Dorsolateral prefrontal cortex (tissue), 120 donors: ENCODE measurements at regions of chr22 and their contacts with region 1.

Region 1: DNA sequence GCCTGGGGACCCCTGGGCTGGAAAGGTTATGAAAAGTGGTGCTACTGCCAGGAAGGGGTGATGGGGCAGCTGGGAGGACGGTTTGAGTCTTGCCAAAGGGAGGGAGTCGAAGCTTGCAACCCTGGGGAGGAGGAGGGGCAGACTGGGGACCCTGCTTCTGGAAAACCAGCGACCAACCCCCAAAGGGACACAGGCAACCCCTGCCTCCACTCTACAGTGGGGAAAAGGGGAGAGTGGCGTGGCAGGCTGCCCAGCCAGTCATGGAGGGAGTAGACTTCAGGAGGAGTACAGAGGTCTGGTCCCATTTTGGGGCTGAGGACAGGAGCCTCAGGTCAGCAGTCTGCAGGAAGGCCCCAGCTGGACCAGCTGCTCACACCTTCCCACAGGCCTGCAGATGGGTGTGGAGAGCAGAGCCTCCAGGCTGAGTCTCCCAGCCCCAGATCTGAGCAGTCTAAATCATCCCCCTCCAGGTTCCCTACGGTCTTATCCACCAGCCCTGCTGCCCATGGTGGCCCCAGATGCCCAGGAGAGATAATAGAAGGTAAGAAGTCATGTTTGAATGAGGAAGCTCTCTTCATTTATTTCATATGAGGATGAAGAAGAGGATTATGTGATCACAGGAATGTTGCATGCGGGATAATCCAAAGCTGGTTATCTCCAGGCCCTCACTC is 3.3 kb downstream of the DDT start:
- DNase-seq: no peak
- H3K4me3 ChIP-seq: no peak overlapping the region
- H3K27ac ChIP-seq: no peak overlapping the region
- H3K27me3 ChIP-seq: no peaks in the 10 kb centered on the region
- CTCF ChIP-seq: no peak

Region 2: DNA sequence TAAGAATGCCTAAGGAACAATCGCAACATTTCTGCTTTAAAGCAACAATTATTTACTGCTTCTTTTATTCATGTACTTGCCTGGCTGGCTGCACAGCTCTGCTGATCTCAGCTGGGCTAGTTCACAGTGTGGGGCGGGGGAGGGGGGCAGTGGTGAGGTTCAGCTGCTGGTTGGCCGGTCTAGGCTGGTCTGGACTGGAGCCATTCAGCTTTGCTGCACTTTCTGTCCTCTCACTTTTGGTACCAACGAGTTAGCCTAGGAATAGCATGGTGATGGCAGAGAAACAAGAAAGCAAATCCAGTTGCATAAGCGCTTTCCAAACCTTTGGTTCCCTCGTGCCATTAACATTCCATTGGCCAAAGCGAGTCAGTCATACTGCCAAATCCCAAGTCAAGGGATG is 92.7 kb before region 1 on chr22:
- intact Hi-C with region 1: no loop called
- DNase-seq: no peak
- H3K4me3 ChIP-seq: no peak overlapping the region
- H3K27ac ChIP-seq: peak overlapping the region in 19 of 59 donors; percentile 7 to 68 (median 38)
- H3K27me3 ChIP-seq: no peaks in the 10 kb centered on the region
- CTCF ChIP-seq: no peak

Region 3: DNA sequence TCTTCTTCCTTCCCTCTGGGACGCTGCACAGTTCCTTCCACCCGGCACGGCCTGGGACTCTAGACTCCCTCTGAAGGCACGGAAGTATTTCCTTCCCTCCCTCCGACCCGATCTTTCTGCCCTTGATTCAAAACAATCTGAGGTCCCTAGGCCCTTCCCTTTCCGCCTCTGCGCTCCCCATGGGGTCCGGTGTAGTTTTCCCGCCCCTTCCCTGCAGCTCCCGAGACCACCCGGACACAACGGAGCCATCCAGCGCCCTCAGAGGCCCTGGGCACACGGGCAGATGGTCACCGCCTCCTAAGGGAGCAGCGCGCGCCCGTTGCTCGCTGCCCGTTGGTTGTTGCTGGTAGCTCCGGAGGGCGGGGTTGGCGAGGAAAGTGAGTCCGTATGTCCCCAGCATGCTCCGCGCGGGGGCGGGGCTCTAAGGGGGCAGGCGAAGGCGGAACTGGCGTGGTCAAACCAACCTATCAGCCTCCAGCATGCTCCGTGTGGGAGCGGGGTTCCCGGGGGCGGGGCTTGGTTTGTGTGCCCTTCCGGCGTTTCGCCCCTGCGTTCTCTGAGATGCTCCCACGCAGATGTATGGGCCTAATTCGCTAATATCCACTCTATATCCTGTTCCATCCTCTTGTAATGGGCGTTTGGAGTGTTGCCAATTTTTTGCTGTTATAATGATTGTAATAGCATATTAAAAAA is 57.1 kb before region 1 on chr22:
- intact Hi-C with region 1: loop called in 1 of 2 experiments (anchors 5 kb)
- DNase-seq: peak; percentile 99 to 100 (median 99)
- H3K4me3 ChIP-seq: peak overlapping the region; percentile 44 to 86 (median 70)
- H3K27ac ChIP-seq: peak overlapping the region; percentile 3 to 96 (median 89)
- H3K27me3 ChIP-seq: no peaks in the 10 kb centered on the region
- CTCF ChIP-seq: peak in 34 of 56 donors; percentile 3 to 57 (median 34)

Region 4: DNA sequence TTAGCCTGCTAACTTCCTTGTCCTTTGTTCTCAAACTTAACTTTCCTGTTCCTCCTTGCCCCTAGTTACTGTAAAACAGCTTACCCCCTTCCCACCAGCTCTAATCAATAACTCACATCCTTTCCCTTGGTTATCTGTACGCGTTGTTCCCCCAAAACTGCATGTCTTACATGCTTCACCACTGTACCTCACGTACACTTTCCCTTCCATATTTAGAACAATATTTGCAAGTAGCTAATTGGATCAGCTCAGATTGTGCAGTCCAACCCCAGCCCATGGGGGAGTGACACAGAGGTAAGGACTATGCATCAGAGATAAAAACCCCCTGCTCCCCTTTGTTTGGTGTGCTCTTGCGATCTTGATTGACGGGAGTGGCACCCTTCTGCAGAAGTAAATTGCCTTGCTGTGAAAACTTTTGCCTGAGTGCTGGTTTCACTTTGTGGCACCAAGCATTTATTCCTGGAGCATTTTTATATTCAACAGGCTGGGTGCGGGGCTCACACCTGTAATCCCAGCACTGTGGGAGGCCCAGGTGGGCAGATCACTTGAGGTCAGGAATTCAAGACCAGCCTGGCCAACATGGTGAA is 45.8 kb before region 1 on chr22:
- intact Hi-C with region 1: loop called (anchors 5 kb)
- DNase-seq: no peak
- H3K4me3 ChIP-seq: no peak overlapping the region
- H3K27ac ChIP-seq: no peak overlapping the region
- H3K27me3 ChIP-seq: no peaks in the 10 kb centered on the region
- CTCF ChIP-seq: no peak

Region 5: GRCh38 chr22:23938328-23939016 is 32.5 kb before region 1 on chr22:
- intact Hi-C with region 1: loop called in 1 of 2 experiments (anchors 5 kb)
- DNase-seq: no peak
- H3K4me3 ChIP-seq: no peak overlapping the region
- H3K27ac ChIP-seq: no peak overlapping the region
- H3K27me3 ChIP-seq: no peaks in the 10 kb centered on the region
- CTCF ChIP-seq: no peak

Region 6: DNA sequence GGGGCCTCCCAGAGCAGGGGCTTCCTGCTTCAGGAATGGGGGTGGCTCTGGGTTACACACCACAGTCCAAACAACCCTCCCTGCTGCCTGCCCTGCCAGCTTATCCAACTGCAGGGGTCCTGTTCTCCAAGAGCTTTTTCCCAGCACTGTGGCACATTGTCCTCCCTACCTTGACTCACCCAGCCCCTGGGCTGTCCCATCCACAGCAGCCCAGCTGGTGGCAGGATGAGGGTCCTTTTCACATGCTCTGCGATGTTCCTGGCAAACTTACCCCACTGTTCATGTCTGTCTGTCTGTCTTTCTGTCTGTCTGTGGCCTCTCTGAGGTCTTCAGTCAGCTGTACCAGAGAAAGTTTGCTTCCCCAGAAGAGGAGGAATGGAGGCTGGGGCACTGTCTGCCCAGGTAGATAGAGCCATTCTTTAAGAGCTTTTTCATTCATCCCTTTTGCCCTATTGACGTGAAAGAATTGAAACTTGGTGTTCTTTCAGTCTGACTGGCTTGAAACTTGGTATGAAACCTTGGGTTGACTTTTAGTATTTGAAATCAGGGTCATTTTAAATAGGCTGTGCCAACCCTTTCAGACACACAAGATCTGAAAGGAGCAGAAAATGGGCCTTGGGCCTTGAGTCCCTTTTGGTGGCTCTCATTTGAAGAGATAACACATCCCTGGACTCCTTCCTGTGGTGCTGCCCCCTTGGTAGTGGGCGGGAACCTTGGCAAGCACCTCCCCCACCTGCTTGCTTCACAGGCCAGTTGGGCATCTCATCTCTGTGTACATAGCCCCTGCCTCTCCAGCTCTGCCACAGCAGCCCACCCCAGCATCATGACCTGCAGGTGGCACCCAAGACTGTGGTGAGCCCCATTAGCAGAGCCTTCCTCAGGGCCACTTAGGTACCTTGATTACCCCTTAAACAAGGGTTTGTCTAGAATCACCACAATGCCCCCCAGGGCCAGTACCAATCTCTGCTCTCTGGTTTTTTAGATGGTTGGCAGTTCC is 135.7 kb after region 1 on chr22:
- intact Hi-C with region 1: no loop called
- DNase-seq: peak in 1 of 10 donors; percentile 1
- H3K4me3 ChIP-seq: no peak overlapping the region
- H3K27ac ChIP-seq: peak overlapping the region in 57 of 59 donors; percentile 6 to 94 (median 75)
- H3K27me3 ChIP-seq: no peaks in the 10 kb centered on the region
- CTCF ChIP-seq: peak in 31 of 56 donors; percentile 11 to 51 (median 26)

Region 7: GRCh38 chr22:24564376-24565058 is 593.6 kb after region 1 on chr22:
- intact Hi-C with region 1: no loop called
- DNase-seq: peak in 1 of 10 donors; percentile 15
- H3K4me3 ChIP-seq: no peak overlapping the region
- H3K27ac ChIP-seq: no peak overlapping the region
- H3K27me3 ChIP-seq: no peaks in the 10 kb centered on the region
- CTCF ChIP-seq: no peak